ENCODE measurements at regions of chr4 and their contacts with region 1.

Region 1: GRCh38 chr4:121462660-121463261 is 81.9 kb upstream of the QRFPR start:
- DNase-seq: no peak
- ATAC-seq: peak; percentile 76

Region 2: GRCh38 chr4:121656269-121656641 is 193.5 kb after region 1 on chr4:
- intact Hi-C with region 1: loop called (anchors 10 kb)
- DNase-seq: peak; percentile 51
- ATAC-seq: peak; percentile 81

Region 3: DNA sequence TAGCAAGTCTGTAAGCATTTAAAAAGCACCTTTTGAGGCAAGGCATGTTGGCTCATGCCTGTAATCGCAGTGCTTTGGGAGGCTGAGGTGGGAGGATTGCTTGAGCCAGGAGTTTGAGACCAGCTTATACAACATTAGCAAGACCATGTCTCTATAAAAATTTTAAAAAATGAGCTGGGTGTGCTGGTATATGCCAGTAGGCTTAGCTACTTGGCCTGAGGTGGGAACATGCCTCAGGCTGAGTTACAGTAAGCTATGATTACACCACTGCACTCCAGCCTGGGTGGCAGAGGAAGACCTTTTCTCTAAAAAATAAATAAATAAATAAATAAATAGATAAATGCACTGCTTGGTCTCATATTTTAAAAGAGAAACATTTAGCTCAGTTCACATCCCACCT is 716.2 kb after region 1 on chr4:
- intact Hi-C with region 1: no loop called
- DNase-seq: no peak
- ATAC-seq: no peak